Sciatic nerve (tissue), 2 donors: ENCODE measurements at regions of chr17 and their contacts with region 1.

Region 1: GRCh38 chr17:80263253-80264204 is 2.9 kb downstream of the RNF213 start:
- DNase-seq: peak; percentile 90
- ATAC-seq: peak; percentile 86

Region 2: DNA sequence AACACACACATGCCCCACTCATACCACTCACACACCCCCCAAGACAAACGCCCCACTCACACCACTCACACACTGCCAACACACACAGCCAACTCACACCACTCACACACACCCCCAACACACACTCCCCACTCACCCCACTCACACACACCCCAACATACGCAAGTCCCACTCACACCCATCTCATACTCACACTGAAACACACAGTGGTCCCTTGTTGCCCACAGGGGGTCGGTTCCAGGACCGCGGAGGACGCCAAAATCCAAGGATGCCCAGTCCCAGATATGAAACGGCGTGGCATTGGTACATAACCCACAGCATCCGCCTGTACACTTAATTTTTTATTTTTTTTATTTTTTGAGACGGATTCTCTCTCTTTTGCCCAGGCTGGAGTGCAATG is 18.0 kb after region 1 on chr17:
- intact Hi-C with region 1: loop called (anchors 1 kb)
- DNase-seq: no peak
- ATAC-seq: no peak

Region 3: GRCh38 chr17:80457236-80457856 is 193.8 kb after region 1 on chr17:
- intact Hi-C with region 1: no loop called
- DNase-seq: no peak
- ATAC-seq: no peak

Region 4: GRCh38 chr17:81911277-81911961 is 1647.9 kb after region 1 on chr17 and contains the start of gene PCYT2:
- intact Hi-C with region 1: no loop called
- DNase-seq: peak; percentile 95
- ATAC-seq: peak; percentile 93
- total RNA-seq, gene PCYT2: 34.1 TPM